Activated B cell treated with CpG ODN at 0.5 μM for 24 hours (primary cell): ENCODE measurements at regions of chr12 and their contacts with region 1.

Region 1: DNA sequence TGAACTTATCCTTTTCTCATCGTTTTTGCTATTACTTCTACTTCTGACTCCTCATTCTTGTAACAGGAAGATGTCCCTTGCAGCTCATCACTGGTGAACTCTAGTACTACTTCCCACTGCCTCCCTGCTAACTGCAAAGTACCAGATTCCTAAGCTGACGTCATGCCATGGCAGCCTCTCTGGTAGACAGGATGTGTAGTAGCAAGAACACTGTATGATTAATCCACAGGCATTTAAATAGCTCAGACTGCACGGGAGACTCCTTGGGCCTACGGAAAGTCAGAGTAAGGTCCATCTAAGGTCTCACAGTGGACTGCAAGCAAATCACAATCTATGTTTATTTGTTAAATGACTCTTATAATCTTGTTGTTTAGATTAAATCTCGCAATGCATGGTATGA is 43.5 kb downstream of the DNAI7 start:
- DNase-seq: no peak
- ATAC-seq: no peak
- H3K4me3 Mint-ChIP-seq: no peak overlapping the region
- H3K27ac Mint-ChIP-seq: no peak overlapping the region
- H3K4me1 Mint-ChIP-seq: peaks cover 22% of the 10 kb centered on the region
- H3K27me3 Mint-ChIP-seq: no peaks in the 10 kb centered on the region
- CTCF ChIP-seq: no peak

Region 2: DNA sequence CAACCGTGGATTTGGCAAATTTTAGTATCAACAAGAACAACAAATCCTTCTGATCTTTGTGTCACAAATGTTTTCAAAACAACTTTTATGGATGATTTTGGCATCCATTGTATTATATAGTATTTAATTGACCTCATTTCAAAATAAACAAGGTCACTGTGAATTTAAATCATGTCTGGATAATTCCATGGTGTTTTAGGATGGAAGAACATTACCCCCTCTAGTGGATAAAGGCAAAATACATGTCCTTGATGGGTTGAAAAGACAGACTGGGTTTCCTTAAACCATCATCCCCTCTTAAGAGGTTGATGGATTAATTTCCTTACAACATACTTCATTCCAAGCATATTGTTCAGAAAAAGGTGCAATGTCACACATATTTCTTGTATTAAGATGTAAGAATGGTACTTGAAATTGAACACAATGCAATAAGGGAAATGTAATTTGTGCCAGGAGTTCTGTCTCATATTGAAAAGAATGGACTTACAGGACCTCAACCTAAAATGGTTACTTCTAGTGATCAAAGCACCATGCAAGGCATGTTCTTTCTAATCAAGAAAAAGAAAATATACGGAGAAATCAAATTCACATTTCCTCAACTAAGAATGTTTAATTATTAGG is 554.6 kb before region 1 on chr12:
- CTCF ChIA-PET with region 1: no interaction called
- POLR2A ChIA-PET with region 1: no interaction called
- intact Hi-C with region 1: loop called (anchors 5 kb)
- DNase-seq: no peak
- ATAC-seq: no peak
- H3K4me3 Mint-ChIP-seq: no peak overlapping the region
- H3K27ac Mint-ChIP-seq: no peak overlapping the region
- H3K4me1 Mint-ChIP-seq: peaks cover 42% of the 10 kb centered on the region
- H3K27me3 Mint-ChIP-seq: no peaks in the 10 kb centered on the region
- CTCF ChIP-seq: no peak

Region 3: DNA sequence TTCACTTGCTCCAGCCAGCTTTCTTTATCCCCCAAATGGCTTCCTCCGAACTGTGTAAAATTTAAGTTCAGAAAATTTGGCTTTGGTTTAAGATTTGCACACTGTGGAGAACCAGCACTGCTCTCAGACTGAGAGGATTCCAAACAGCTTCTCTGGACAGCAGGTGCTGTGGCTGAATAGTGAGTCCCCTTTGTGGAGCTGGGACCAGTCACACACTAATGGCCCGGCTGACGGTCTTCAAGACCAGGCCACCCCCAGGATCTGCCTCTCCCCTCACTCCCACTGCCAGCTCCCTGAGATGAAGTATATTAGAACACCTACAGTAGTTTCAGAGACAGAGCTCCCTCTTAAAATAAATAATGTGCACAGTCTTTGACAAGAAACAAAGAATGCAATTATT is 469.9 kb before region 1 on chr12:
- CTCF ChIA-PET with region 1: no interaction called
- POLR2A ChIA-PET with region 1: no interaction called
- intact Hi-C with region 1: no loop called
- DNase-seq: no peak
- ATAC-seq: no peak
- H3K4me3 Mint-ChIP-seq: no peak overlapping the region
- H3K27ac Mint-ChIP-seq: no peak overlapping the region
- H3K4me1 Mint-ChIP-seq: no peaks in the 10 kb centered on the region
- H3K27me3 Mint-ChIP-seq: no peaks in the 10 kb centered on the region
- CTCF ChIP-seq: no peak

Region 4: DNA sequence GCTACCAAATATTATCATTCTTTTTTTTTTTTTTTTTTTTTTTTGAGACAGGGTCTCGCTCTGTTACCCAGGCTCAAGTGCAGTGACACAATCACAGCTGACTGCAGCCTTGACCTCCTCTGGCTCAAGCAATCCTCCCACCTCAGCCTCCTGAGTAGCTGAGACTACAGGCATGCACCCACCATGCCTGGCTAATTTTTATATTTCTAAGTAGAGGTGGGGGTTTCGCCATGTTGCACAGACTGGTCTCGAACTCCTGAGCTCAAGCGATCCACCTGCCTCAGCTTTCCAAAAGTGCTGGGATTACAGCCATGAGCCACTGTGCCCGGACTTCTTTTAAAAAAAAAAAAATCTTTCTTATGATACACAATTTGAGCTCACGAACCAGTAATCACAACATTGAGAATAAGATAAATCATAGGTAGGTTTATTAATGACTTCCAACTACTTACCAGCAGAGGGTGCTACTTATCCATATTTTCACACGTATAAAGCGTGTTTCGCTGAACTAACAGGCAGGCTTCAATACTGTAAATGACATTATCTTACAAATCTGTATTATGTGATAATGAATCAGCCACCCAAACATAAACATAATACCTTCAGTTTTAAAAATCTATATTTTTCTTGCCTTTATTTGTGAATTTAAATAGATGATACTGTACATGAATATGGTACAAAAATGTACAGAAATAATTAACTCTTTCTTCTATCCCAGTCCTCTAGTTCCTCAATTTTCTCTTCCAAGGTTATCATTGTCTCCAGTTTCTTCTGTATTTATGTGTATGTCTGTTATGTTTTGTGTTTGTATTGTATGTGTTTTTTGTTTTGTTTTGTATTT is 160.0 kb before region 1 on chr12:
- CTCF ChIA-PET with region 1: interaction called, 16 read pairs
- POLR2A ChIA-PET with region 1: interaction called, 10 read pairs
- intact Hi-C with region 1: loop called (anchors 1 kb)
- DNase-seq: no peak
- ATAC-seq: peak; percentile 65
- H3K4me3 Mint-ChIP-seq: no peak overlapping the region
- H3K27ac Mint-ChIP-seq: no peak overlapping the region
- H3K4me1 Mint-ChIP-seq: peaks cover 46% of the 10 kb centered on the region
- H3K27me3 Mint-ChIP-seq: no peaks in the 10 kb centered on the region
- CTCF ChIP-seq: no peak

Region 5: GRCh38 chr12:25186788-25187397 is 35.4 kb after region 1 on chr12:
- CTCF ChIA-PET with region 1: no interaction called
- POLR2A ChIA-PET with region 1: interaction called, 6 read pairs
- intact Hi-C with region 1: loop called (anchors 1 kb)
- DNase-seq: no peak
- ATAC-seq: peak; percentile 69
- H3K4me3 Mint-ChIP-seq: peak overlapping the region; percentile 78
- H3K27ac Mint-ChIP-seq: peak overlapping the region; percentile 26
- H3K4me1 Mint-ChIP-seq: peaks cover 10% of the 10 kb centered on the region
- H3K27me3 Mint-ChIP-seq: no peaks in the 10 kb centered on the region
- CTCF ChIP-seq: no peak

Region 6: DNA sequence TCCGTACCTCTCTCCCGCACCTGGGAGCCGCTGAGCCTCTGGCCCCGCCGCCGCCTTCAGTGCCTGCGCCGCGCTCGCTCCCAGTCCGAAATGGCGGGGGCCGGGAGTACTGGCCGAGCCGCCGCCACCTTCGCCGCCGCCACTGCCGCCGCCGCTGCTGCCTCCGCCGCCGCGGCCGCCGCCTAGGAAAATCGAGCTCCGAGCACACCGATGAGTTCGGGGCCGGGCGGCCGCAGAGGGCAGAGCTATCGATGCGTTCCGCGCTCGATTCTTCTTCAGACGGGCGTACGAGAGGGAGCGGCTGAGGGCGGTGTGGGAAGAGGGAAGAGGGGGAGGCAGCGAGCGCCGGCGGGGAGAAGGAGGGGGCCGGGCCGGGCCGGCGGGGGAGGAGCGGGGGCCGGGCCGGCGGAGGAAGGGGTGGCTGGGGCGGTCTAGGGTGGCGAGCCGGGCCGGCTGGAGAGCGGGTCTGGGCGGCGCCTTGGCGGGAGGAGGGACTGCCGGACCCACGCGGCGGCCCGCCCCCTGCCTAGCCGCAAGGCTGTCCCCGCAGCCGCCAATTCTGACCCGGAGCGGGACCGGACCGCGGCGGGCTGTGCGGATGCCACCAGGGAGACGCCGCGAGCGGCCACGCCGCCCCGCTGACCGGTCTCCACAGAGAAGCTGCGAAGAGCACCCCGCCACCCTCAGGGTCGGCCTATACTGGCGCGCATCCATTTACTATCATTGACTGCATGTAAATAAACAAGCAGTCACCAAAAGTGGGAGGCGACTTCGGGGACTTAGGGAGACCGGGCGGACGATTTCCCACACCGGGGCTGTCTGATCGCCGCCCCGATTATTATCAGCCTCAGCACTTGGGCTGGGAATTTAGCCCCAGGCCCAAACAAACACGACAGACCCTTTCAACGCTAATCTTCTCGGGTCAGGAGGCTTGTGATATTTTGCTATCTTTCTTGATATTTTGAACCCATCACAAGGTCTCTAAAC is 99.6 kb after region 1 on chr12 and contains the start of gene KRAS:
- CTCF ChIA-PET with region 1: no interaction called
- POLR2A ChIA-PET with region 1: interaction called, 6 read pairs
- intact Hi-C with region 1: loop called (anchors 2 kb)
- DNase-seq: peak; percentile 88
- ATAC-seq: peak; percentile 85
- H3K4me3 Mint-ChIP-seq: peak within 1 kb of the TSS; percentile 95
- H3K27ac Mint-ChIP-seq: peak within 1 kb of the TSS; percentile 95
- H3K4me1 Mint-ChIP-seq: peaks cover 48% of the 10 kb centered on the region
- H3K27me3 Mint-ChIP-seq: no peaks in the 10 kb centered on the region
- CTCF ChIP-seq: no peak
- total RNA-seq, gene KRAS: 43.3 and 45.8 TPM in 2 replicates

Region 7: DNA sequence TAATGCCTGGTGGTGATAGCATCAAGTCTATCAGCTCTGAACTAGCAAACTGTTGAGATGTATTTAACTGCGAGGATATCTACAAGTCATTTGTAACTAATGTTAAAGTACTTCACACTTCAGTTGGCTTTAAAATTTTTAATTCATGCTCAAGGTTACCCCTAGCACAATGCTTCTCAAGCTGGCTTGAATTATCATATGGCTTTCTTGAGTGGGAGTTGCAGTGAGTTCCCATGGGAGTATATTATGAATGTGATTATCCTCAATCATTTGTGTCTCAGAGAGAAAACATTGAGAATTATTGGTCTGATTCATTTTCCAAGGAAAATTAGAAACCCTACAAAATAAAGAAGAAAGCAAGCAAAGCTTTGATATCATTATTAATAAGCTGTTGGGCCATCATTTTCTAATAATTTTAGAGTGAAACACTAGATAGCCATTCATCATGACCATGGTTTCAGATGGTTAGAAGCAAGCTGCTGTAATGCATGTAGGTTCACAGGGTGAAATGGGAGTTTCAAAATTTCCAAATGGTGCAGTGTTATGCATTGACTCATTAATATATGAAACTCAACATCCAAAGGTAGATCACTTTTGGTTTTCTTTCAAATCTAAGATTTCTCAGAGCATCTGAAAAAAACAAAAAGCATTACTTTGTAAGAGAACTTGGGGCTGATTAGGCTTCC is 111.1 kb after region 1 on chr12:
- CTCF ChIA-PET with region 1: no interaction called
- POLR2A ChIA-PET with region 1: no interaction called
- intact Hi-C with region 1: no loop called
- DNase-seq: no peak
- ATAC-seq: no peak
- H3K4me3 Mint-ChIP-seq: no peak overlapping the region
- H3K27ac Mint-ChIP-seq: no peak overlapping the region
- H3K4me1 Mint-ChIP-seq: peaks cover 14% of the 10 kb centered on the region
- H3K27me3 Mint-ChIP-seq: no peaks in the 10 kb centered on the region
- CTCF ChIP-seq: no peak

Region 8: GRCh38 chr12:25386831-25387731 is 235.6 kb after region 1 on chr12:
- CTCF ChIA-PET with region 1: no interaction called
- POLR2A ChIA-PET with region 1: no interaction called
- intact Hi-C with region 1: loop called (anchors 1 kb)
- DNase-seq: peak; percentile 45
- ATAC-seq: peak; percentile 11
- H3K4me3 Mint-ChIP-seq: peak overlapping the region; percentile 97
- H3K27ac Mint-ChIP-seq: peak overlapping the region; percentile 100
- H3K4me1 Mint-ChIP-seq: peaks cover 34% of the 10 kb centered on the region
- H3K27me3 Mint-ChIP-seq: no peaks in the 10 kb centered on the region
- CTCF ChIP-seq: peak; percentile 62

Region 9: GRCh38 chr12:27085654-27086053 is 1934.2 kb after region 1 on chr12:
- CTCF ChIA-PET with region 1: no interaction called
- POLR2A ChIA-PET with region 1: no interaction called
- intact Hi-C with region 1: no loop called
- DNase-seq: no peak
- ATAC-seq: no peak
- H3K4me3 Mint-ChIP-seq: no peak overlapping the region
- H3K27ac Mint-ChIP-seq: no peak overlapping the region
- H3K4me1 Mint-ChIP-seq: peaks cover 5% of the 10 kb centered on the region
- H3K27me3 Mint-ChIP-seq: no peaks in the 10 kb centered on the region
- CTCF ChIP-seq: no peak